ENCODE measurements at regions of chr1 and their contacts with region 1.

Region 1: GRCh38 chr1:39354572-39354971 is 136.9 kb upstream of the BMP8A start:
- DNase-seq: no peak
- ATAC-seq: no peak
- H3K4me3 ChIP-seq: no peak overlapping the region
- H3K27ac ChIP-seq: no peak overlapping the region
- H3K4me1 ChIP-seq: peaks cover 0 to 14% (median 8%) of the 10 kb centered on the region in 9 donors
- H3K27me3 ChIP-seq: no peaks in the 10 kb centered on the region
- CTCF ChIP-seq: peak in 1 of 9 donors; percentile 8

Region 2: DNA sequence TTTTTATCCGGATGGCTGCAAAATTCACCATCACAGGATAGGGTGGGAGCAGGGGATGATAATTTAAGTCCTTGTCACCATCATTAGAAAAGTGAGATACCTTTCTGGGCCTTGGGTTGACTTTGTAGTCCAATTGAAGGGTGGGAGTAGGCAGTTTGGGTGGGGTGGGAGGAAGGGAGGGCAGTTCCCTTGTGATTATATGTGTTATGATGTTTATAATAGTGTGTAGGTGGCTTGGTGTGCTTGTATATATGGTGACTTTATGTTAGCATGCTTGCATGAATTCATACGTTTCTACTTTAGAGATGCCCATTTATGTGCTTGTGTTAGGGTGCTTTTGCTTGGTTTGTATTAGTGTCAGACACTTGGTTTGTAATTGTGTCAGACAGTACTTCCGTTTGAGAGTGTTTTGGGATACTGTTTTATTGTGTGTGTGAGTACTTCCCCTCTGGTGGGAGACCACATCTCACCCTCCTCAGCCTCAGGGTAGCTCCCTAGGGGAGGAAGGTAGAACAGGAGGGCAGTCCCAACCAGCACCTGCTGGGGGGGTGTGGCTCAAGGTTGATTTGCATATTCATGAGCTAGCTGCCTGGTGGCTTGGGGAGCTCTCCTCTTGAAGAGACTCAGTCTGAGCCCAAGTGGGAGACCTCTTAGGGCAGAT is 1301.7 kb before region 1 on chr1:
- intact Hi-C with region 1: loop called in 1 of 10 experiments (anchors 5 kb)
- DNase-seq: no peak
- ATAC-seq: no peak
- H3K4me3 ChIP-seq: no peak overlapping the region
- H3K27ac ChIP-seq: no peak overlapping the region
- H3K4me1 ChIP-seq: peaks cover 0 to 1% (median 0%) of the 10 kb centered on the region in 9 donors
- H3K27me3 ChIP-seq: peaks cover 0 to 34% (median 30%) of the 10 kb centered on the region in 7 donors
- CTCF ChIP-seq: no peak

Region 3: DNA sequence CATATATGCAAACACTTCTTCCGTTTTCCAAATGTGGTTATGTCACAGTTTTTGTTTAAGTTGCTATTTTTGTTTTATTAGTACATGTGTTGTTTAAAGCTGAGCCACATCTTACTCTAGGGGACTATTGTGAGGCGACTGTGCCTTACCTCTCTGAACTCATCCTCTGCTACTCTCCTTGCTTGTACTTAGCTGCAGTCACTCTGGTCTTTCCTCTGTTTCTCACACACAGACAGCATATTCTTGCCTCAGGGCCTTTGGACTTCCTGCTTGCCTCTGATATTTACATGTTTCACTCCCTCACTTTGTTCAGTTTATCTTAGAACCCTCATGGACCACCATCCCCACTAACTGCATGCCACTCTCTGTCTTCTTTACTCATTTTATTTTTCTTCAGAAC is 49.0 kb before region 1 on chr1:
- intact Hi-C with region 1: no loop called
- DNase-seq: no peak
- ATAC-seq: no peak
- H3K4me3 ChIP-seq: no peak overlapping the region
- H3K27ac ChIP-seq: no peak overlapping the region
- H3K4me1 ChIP-seq: no peaks in the 10 kb centered on the region
- H3K27me3 ChIP-seq: no peaks in the 10 kb centered on the region
- CTCF ChIP-seq: no peak

Region 4: DNA sequence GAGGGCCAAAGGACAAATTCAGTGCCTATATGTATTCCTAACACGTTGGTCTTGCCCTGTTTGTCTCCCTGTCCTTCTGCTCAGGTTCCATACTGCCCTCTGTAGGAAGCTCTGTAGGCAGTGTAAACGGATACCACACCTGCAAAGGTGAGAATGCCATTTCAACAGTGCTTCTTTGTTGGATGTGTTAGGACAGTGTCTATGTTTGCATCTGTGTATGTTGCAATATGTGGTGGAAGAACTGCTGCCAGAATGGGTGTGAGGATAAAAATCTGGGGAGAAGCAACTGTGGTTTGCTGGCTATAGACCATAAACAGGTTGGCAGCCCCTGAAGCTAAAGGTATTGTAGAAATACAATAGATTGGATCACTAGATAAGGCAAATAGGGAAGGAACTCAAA is 23.8 kb after region 1 on chr1:
- intact Hi-C with region 1: no loop called
- DNase-seq: no peak
- ATAC-seq: no peak
- H3K4me3 ChIP-seq: no peak overlapping the region
- H3K27ac ChIP-seq: no peak overlapping the region
- H3K4me1 ChIP-seq: peaks cover 0 to 10% (median 7%) of the 10 kb centered on the region in 9 donors
- H3K27me3 ChIP-seq: no peaks in the 10 kb centered on the region
- CTCF ChIP-seq: peak in 5 of 9 donors; percentile 24 to 35 (median 35)

Region 5: DNA sequence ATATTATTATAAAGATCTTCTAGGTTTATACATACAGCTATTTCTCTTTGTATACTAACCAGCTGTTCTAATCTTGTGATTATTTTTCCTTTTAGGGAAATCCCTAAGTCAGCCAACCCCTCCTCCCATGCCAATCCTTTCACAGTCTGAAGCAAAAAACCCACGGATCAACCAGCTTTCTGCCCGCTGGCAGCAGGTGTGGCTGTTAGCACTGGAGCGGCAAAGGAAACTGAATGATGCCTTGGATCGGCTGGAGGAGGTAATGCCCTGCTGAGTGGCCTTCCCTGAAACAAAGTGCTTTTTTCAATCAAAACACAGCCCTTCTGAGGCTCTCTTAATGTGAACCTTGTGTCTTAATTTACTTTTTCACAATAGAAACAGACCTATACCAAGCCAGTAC is 104.4 kb after region 1 on chr1:
- intact Hi-C with region 1: loop called in 1 of 10 experiments (anchors 5 kb)
- DNase-seq: no peak
- ATAC-seq: no peak
- H3K4me3 ChIP-seq: no peak overlapping the region
- H3K27ac ChIP-seq: no peak overlapping the region
- H3K4me1 ChIP-seq: no peaks in the 10 kb centered on the region
- H3K27me3 ChIP-seq: no peaks in the 10 kb centered on the region
- CTCF ChIP-seq: no peak

Region 6: DNA sequence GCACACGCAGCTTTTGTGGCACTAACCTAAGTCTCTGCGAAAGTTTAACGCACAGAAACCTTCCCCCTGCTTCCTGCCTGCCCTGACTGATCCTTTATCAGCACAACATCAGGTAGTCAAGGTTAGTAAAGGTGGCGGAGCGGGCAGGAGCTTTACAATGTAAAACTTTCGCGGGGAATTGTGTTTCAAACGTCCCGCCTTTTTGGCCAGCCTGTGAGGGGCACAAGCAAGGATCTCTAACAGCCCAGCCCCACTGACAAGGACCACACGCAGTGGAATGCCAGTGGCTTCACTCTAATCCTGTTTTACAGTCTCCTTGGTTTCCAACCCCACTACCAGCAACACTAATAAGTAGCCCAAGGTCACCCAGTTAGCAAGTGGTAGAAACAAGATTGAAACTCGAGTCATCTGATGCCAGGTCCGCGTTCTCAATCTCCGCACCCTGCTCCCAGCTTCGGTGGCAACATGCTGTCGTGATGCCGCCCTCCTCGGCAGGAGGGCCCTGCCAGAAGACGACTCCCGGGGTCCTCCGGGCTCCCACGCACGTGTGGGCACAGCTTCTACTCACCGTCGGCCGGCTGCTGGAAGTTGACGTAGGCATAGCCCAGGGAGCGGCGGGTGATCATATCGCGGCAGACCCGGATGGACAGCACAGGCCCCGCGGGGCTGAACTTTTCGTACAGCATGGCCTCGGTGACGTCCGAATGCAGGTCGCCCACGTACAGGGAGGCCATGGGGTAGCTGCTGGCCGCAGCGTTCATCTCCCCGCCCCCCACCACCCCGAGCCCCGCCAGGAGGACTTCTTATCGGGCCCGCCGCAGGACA is 220.8 kb after region 1 on chr1:
- intact Hi-C with region 1: no loop called
- DNase-seq: peak; percentile 58 to 73
- ATAC-seq: peak; percentile 43 to 79 (median 68)
- H3K4me3 ChIP-seq: peak overlapping the region; percentile 72 to 94 (median 83)
- H3K27ac ChIP-seq: peak overlapping the region; percentile 63 to 96 (median 94)
- H3K4me1 ChIP-seq: peaks cover 4 to 48% (median 36%) of the 10 kb centered on the region in 9 donors
- H3K27me3 ChIP-seq: no peaks in the 10 kb centered on the region
- CTCF ChIP-seq: no peak

Region 7: GRCh38 chr1:39632682-39633417 is 278.3 kb after region 1 on chr1:
- intact Hi-C with region 1: no loop called
- DNase-seq: peak; percentile 64 to 85
- ATAC-seq: peak; percentile 49 to 83 (median 68)
- H3K4me3 ChIP-seq: peak overlapping the region; percentile 10 to 79 (median 64)
- H3K27ac ChIP-seq: peak overlapping the region; percentile 43 to 96 (median 90)
- H3K4me1 ChIP-seq: peaks cover 0 to 63% (median 6%) of the 10 kb centered on the region in 9 donors
- H3K27me3 ChIP-seq: peaks cover 0 to 25% (median 6%) of the 10 kb centered on the region in 7 donors
- CTCF ChIP-seq: no peak

Measured in heart right ventricle (tissue), 16 donors.